HEK293T (cell line): ENCODE measurements at regions of chr7 and their contacts with region 1.

Region 1: GRCh38 chr7:32942786-32943653 is 14.2 kb upstream of the FKBP9 start:
- DNase-seq: peak; percentile 83

Region 2: DNA sequence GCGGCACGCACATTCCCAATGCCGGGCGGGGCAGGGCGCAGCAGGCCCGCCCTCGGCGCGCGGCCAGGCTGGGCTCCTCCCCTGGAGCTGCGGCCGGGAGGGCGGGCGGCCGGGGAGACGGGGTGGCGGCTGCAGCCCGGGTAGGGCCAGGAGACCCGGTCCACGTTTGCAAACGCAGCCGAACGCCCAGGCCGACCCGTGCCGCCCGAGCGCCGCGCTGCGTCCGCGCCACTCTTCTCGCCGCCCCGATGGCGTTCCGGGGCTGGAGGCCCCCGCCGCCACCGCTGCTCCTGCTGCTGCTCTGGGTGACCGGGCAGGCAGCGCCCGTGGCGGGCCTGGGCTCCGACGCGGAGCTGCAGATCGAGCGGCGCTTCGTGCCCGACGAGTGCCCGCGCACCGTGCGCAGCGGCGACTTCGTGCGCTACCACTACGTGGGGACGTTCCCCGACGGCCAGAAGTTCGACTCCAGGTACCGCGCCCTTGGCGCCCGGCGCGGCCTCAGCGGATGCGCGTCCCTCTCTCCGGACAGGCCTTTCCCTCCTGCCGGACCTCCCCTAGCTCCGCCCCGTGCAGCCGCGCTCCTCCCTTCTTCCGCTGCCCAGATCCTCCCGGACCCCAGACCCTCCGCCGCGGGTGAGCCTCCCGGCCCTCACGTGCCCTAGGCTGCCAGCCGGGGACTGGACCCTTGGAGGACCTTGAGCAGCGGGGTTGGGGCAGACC is 14.5 kb after region 1 on chr7 and contains the start of gene FKBP9:
- CTCF ChIA-PET with region 1: no interaction called
- POLR2A ChIA-PET with region 1: interaction called, 12 read pairs
- DNase-seq: peak; percentile 81